Posterior vena cava (tissue), 2 donors: ENCODE measurements at regions of chr4 and their contacts with region 1.

Region 1: DNA sequence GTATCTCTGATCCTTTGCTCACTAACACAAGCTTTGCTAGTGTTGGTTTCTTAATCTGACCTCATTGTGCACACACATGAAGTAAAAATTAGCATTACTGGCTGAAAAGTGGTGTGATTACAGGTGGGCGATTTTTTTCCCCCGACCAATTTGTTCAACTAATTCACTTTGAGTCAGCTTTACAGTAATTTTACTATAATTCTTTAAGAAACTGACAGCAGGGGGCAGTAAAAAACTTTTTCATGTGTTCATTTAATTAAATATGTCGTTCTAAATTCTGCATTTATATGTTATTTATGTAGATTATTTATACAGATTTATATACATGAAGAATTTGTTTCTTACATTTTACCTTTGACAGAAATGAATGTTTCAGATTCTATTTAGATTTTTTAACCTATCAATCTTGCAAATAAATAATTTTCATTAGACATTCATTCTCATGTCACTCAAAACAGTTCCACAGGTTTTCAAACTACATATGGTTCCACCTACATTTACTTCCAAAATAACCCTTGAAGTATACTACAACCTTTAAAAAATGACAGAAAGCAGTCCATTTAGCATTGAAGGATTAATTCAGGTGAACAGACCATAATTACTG is 17.5 kb downstream of the PALLD start:
- DNase-seq: no peak

Region 2: DNA sequence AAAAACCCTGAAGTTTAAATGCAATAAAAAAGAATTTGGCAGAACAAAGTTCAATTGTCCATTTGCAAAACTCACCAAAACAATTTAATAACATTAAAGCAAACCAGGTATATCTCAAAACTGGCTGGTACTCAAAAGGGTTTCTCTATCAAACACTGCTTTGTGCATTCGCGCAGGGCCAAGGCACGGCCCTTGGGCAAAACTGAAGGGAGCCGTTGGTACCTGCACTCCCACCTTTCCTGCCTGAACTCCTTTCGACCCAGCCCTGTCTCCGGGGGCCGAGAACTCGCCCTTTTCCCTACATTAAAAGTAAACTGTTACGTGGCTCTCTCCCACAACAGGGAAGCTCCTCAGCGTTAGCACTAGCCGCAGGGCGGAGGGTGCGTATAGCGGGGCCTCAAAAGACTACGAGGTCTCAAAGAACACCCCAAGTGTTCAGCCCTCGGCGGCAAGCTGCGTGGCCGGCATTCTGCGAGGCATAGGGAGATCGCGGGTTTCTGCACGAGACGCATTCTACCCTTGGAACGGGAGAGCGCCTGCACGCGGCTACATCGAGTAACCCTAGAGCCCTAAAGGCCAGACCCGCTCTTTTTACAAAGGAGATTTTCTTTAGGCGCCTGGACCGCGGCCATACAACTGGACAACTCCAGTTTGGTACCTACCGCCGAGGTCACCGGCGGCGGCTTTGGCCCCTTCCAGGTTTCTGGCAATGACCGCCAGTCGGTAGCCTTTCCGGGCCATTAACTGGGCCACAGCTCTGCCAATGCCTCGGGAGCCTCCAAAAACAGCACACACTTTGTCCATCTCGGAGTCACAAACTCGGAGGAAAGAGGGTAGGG is 495.2 kb after region 1 on chr4:
- intact Hi-C with region 1: loop called in 1 of 2 experiments (anchors 10 kb)
- DNase-seq: peak; percentile 91